Sciatic nerve (tissue), 2 donors: ENCODE measurements at regions of chr1 and their contacts with region 1.

Region 1: DNA sequence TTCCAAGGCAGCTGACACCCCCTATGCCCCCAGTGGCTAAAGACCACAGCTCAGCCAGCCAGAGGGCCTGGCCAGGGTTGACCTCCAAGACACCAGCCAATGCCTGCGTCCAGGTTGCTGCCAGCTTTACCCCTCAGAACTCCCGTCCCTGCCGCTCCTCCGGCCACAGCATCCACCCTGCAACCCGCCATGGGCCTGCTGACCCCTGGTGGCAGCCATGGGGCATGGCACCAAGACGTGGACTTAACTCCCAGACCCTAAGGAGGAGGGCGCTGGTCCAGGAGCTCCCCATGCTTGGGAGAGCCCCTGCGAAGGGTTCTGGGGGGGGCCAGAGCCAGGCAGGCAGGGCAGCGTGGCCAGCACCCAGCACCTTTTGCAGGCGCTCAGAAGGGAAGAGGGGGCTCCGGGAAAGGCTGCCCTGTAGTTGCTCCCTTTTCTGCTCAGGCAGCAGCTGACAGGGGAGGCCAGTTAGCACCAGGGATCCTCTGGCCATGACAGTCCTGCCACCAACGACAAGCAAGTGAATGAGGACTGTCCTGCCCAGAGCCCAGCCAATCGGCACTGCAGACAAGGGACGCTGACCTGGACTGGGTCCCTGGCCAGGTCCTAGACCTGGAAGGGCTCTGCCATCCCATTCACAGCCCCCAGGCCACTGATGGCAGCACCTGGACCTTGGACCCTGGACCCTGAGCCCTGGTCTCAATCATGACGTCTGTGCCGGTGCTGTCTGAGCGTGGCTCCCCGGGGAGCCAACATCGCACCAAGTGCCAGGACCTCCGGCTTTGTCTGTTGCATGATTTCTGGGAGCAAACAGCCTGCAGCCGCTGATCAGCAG is 246.2 kb downstream of the NPHP4 start:
- DNase-seq: peak; percentile 83
- ATAC-seq: peak; percentile 84

Region 2: DNA sequence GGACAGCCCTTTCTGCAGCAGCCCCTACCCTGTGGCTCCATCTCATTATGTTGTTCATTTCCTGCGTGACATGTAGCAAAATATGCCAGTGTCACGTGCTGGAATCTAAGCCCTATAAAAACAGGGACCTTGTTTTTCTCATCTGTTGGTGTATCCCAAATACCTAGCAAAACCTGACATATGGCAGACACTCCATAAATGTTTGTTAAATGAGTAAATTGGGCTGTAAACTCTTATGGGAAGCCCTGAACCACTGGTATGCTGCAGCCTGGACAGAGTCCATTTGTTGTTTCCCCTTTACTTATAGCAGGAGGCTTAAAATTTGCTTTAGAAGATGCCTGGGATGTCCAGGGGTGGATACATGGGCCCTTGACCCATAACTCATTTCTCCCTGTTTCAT is 117.6 kb before region 1 on chr1:
- intact Hi-C with region 1: loop called (anchors 5 kb)
- DNase-seq: no peak
- ATAC-seq: no peak

Region 3: DNA sequence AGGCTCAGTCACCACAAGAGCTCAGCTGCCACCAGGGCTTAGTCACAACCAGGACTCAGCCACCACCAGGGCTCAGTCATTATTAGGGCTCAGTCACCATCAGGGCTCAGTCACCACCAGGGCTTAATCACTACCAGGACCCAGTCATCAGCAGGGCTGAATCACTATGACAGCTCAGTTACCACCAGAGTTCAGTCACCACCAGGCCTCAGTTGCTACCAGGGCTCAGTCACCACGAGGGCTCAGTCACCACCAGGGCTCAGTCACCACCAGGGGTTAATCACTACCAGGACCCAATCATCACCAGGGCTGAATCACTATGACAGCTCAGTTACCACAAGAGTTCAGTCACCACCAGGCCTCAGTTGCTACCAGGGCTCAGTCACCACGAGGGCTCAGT is 50.0 kb after region 1 on chr1:
- intact Hi-C with region 1: no loop called
- DNase-seq: no peak
- ATAC-seq: no peak